Activated naive CD4-positive, alpha-beta T cell treated with anti-CD3 and anti-CD28 coated beads for 36 hours (primary cell): ENCODE measurements at regions of chr7 and their contacts with region 1.

Region 1: GRCh38 chr7:22488643-22489462 is 11.1 kb downstream of the STEAP1B start:
- DNase-seq: peak; percentile 80
- H3K4me3 Mint-ChIP-seq: no peak overlapping the region
- H3K27ac Mint-ChIP-seq: no peak overlapping the region
- H3K4me1 Mint-ChIP-seq: no peaks in the 10 kb centered on the region
- H3K27me3 Mint-ChIP-seq: no peaks in the 10 kb centered on the region

Region 2: GRCh38 chr7:22195397-22196172 is 293.3 kb before region 1 on chr7:
- CTCF ChIA-PET with region 1: no interaction called
- intact Hi-C with region 1: no loop called
- DNase-seq: no peak
- H3K4me3 Mint-ChIP-seq: no peak overlapping the region
- H3K27ac Mint-ChIP-seq: no peak overlapping the region
- H3K4me1 Mint-ChIP-seq: no peaks in the 10 kb centered on the region
- H3K27me3 Mint-ChIP-seq: peaks cover 2% of the 10 kb centered on the region

Region 3: DNA sequence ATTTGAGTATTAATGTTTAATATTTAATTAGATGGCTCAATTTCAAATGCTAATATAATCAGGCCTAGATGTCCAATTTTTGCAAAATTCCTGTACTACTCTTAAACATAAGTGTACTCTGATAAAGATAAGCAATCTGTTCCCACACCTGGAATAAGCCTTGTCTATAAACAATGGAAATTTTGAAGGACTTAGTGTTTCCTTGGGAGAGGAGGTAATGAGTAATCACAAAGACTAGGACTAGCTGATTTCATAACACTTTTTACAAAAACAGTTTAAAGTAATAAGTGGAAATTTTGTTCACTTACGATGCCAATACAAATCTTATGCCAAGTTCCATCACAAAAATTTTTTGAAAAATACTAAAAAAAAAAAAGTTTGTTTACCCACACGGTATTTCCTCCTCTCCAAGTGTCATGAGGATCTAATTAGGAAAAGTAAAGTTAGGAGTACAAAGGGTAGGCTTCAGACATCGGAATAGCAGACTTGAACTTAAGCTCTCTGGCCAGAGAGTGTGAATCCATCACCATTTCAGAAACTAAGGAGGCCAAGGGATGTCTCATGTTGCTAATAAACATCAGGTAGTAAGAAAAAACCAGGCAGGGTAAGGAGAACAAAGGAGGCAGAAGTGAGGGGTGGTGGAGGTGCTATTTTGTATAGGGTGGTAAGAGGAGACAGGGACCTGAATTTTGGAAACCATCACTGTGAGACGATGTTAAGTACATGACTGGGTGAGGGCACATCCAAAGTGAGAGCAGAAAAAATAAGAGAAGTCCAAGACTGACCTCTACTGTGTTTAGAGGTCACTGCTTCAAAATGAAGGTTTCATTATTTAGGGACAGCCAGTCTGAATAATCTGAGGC is 193.2 kb before region 1 on chr7:
- CTCF ChIA-PET with region 1: no interaction called
- intact Hi-C with region 1: loop called (anchors 10 kb)
- DNase-seq: no peak
- H3K4me3 Mint-ChIP-seq: no peak overlapping the region
- H3K27ac Mint-ChIP-seq: no peak overlapping the region
- H3K4me1 Mint-ChIP-seq: no peaks in the 10 kb centered on the region
- H3K27me3 Mint-ChIP-seq: peaks cover 1% of the 10 kb centered on the region

Region 4: DNA sequence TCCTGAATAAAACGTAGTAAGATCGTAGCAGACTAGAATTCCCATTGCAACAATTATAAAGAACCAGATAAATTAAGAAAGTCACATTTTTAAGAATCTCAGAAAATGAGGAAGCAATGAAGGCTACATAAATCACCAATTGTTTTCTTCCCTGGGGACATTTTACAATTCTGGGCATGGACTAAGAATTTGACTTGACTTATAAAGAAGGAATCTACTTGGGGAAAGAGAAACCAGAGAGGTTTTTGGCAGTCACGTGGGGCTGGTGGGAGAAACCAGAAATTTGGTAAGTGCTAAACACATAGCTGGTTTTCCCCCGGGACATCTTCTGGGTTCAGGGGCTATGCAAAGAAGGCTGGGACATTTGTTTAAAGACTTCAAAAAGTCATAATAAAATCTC is 128.3 kb after region 1 on chr7:
- CTCF ChIA-PET with region 1: no interaction called
- intact Hi-C with region 1: no loop called
- DNase-seq: no peak
- H3K4me3 Mint-ChIP-seq: no peak overlapping the region
- H3K27ac Mint-ChIP-seq: no peak overlapping the region
- H3K4me1 Mint-ChIP-seq: peaks cover 5% of the 10 kb centered on the region
- H3K27me3 Mint-ChIP-seq: peaks cover 14% of the 10 kb centered on the region